Pancreas (tissue), 10 donors: ENCODE measurements at regions of chr20 and their contacts with region 1.

Region 1: DNA sequence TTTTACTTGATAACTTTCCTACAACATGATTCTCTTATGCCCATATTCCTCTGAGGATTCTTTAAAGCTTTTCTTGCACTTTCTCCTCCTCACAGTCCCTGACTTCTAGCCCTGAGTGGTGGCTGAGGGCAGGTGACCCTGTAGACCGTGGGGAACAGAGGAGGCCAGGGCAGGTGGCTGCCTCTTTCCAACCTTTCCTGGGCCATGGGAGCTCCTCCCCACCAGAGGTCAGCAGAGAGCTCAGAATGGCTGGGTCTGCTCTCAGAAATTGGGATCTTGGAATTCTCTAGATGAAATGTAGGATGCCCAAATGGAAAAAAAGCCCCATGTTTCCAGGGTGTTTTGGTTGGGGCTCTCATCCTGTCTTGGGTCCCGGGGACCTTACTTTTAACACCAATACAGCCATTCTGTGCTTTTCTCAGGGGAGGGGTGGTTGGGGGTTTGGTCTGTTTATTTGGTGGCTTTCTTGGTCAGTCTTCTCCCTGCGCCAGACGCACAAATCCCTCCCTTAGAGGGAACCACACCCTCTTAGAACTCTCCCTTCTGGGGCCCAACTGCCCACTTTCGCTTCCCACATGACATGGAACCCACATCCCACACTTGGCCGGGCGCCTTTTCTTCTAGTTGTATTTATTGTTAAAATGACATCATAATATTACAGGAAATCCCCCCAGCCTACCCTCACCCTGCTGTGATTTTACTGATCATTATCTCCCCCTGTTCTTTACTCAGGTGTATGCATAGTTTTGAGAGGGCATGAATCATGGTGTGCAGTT is 17.9 kb downstream of the GNAS start:
- DNase-seq: peak; percentile 69 to 87 (median 80)
- ATAC-seq: peak; percentile 95 to 99 (median 97)
- H3K4me3 ChIP-seq: no peak overlapping the region
- H3K27ac ChIP-seq: no peak overlapping the region
- H3K4me1 ChIP-seq: no peaks in the 10 kb centered on the region
- H3K27me3 ChIP-seq: no peaks in the 10 kb centered on the region
- CTCF ChIP-seq: peak; percentile 65 to 89 (median 84)

Region 2: DNA sequence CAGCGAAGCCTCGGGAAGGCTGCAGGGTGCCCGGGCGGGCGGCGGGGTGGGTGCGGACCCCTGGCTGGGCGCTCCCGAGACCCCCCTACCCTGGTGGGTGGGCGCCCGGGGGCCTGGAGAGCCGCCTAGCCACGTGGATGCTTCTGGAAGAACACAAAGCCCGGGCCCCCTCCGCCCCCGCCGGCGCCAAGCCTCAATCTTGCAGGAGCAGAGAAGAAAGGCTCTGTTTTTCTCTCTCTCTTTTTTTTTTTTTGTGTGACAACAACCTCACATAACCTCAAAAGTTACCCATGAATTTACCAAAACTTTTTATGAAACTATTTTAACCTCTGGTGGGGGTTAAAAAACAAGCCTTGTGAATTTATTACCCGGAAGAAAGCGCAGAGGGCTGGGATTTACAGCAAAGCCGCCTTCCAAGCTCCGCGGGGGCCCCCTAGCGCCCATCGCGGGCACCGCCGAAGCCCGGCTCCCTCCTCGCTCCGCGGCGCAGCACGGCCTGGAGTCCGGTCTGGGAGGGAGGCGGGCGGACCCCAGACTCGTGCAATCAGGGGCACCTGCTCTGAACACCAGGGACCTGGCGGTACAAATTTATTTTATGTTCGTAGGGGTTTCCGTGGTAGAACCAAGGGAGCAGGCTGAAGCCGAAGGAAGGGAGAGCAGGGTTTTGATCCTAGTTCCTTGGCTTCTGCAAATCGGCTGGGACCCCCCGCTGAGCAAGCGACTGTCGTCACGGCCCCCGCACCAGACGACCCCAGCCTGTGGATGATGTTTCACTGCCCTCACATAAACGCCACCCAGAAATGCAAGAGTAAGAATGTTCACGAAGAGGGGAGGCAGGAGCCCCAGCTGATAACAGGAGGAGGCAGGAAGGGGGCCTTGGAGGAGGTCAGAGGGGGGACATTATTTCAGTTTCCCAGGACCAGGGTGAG is 352.1 kb after region 1 on chr20:
- intact Hi-C with region 1: loop called in 2 of 3 experiments (anchors 5 to 10 kb)
- DNase-seq: peak; percentile 66 to 97 (median 82)
- ATAC-seq: peak; percentile 97 to 99 (median 97)
- H3K4me3 ChIP-seq: peak overlapping the region; percentile 49 to 65 (median 52)
- H3K27ac ChIP-seq: peak overlapping the region in 2 of 4 donors; percentile 24 to 66
- H3K4me1 ChIP-seq: peaks cover 0 to 8% (median 0%) of the 10 kb centered on the region in 3 donors
- H3K27me3 ChIP-seq: peaks cover 0 to 3% (median 0%) of the 10 kb centered on the region in 4 donors
- CTCF ChIP-seq: peak; percentile 82 to 95 (median 92)